ENCODE measurements at regions of chr6 and their contacts with region 1.

Region 1: DNA sequence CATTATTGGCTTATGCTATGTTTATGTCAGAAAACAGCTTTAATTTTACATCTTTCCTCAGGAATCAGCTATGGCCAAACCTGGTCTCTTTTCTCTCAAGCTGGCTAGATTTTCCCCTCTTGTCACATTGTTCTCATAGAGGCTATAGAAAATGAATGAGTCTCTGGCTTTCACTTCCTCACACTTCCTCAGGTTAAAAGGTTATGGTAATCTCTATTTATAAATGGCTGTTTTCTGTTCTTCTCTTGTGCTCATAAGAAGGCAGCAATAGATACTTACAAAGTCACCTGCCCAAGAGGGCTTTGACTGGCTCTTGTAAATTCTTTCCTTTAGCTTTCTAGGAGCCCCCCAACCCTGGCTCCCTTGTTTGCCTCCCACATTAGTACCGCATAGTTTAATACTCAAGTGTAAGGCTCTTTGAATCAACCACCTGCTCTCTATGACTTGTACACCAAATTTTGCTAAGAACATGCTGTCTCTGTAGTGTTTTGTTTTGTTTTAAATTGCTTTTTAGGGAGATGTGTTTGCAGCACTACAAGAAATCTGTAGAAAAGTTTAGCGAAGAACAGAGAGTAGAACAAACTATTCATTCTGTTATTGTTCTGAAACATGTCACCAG is 897.4 kb upstream of the CITED2 start:
- DNase-seq: peak; percentile 36
- ATAC-seq: peak; percentile 94
- H3K4me3 ChIP-seq: no peak overlapping the region
- H3K27ac ChIP-seq: peak overlapping the region; percentile 58
- H3K4me1 ChIP-seq: peaks cover 4% of the 10 kb centered on the region; the same call in 1 of the 2 replicates
- H3K27me3 ChIP-seq: no peaks in the 10 kb centered on the region
- CTCF ChIP-seq: no peak
- EP300 ChIP-seq: peak; percentile 46 to 51; a peak in 2 of 4 replicates
- POLR2A ChIP-seq: no peak
- RAD21 ChIP-seq: 0 out of 2 replicates have a peak, but pooled peaks have one; percentile 8

Region 2: GRCh38 chr6:140285471-140285870 is 13.6 kb after region 1 on chr6:
- CTCF ChIA-PET with region 1: interaction called, 6 read pairs
- POLR2A ChIA-PET with region 1: interaction called, 5 read pairs
- RAD21 ChIA-PET with region 1: interaction called, 8 read pairs
- SMC1A ChIA-PET with region 1: interaction called, 26 read pairs
- in situ Hi-C with region 1: no loop called
- intact Hi-C with region 1: no loop called
- DNase-seq: no peak
- ATAC-seq: no peak
- H3K4me3 ChIP-seq: no peak overlapping the region
- H3K27ac ChIP-seq: no peak overlapping the region
- H3K4me1 ChIP-seq: no peaks in the 10 kb centered on the region
- H3K27me3 ChIP-seq: no peaks in the 10 kb centered on the region
- CTCF ChIP-seq: no peak
- EP300 ChIP-seq: no peak
- POLR2A ChIP-seq: no peak
- RAD21 ChIP-seq: no peak

Region 3: DNA sequence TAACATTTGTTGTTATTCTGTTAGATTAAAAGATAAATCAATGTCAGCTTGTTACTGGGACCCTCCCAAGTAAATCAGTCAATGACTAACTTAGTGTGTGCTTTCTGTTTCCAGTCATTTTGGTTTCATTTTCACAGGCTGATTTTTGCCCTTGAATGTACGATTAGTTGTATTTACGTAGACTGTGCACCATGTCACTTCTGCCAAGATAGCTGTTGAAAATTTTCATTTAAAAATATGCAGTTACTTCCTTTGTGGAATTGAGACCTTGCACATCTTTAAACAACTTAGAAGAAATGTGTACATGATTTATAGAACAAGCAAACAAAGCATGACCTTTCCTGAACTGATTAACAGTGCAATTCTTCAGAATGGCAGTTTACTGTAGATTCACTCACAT is 47.3 kb after region 1 on chr6:
- CTCF ChIA-PET with region 1: interaction called, 4 read pairs
- POLR2A ChIA-PET with region 1: interaction called, 3 read pairs
- RAD21 ChIA-PET with region 1: interaction called, 13 read pairs
- SMC1A ChIA-PET with region 1: interaction called, 4 read pairs
- in situ Hi-C with region 1: no loop called
- intact Hi-C with region 1: no loop called
- DNase-seq: no peak
- ATAC-seq: peak; percentile 83
- H3K4me3 ChIP-seq: no peak overlapping the region
- H3K27ac ChIP-seq: no peak overlapping the region
- H3K4me1 ChIP-seq: no peaks in the 10 kb centered on the region
- H3K27me3 ChIP-seq: no peaks in the 10 kb centered on the region
- CTCF ChIP-seq: no peak
- EP300 ChIP-seq: no peak
- POLR2A ChIP-seq: no peak
- RAD21 ChIP-seq: no peak

Region 4: GRCh38 chr6:140566781-140567231 is 294.9 kb after region 1 on chr6:
- CTCF ChIA-PET with region 1: no interaction called
- POLR2A ChIA-PET with region 1: no interaction called
- RAD21 ChIA-PET with region 1: no interaction called
- SMC1A ChIA-PET with region 1: no interaction called
- in situ Hi-C with region 1: no loop called
- intact Hi-C with region 1: no loop called
- DNase-seq: no peak
- ATAC-seq: no peak
- H3K4me3 ChIP-seq: no peak overlapping the region
- H3K27ac ChIP-seq: no peak overlapping the region
- H3K4me1 ChIP-seq: no peaks in the 10 kb centered on the region
- H3K27me3 ChIP-seq: no peaks in the 10 kb centered on the region
- CTCF ChIP-seq: no peak
- EP300 ChIP-seq: no peak
- POLR2A ChIP-seq: no peak
- RAD21 ChIP-seq: no peak